GM12878 (cell line): ENCODE measurements at regions of chr3 and their contacts with region 1.

Region 1: DNA sequence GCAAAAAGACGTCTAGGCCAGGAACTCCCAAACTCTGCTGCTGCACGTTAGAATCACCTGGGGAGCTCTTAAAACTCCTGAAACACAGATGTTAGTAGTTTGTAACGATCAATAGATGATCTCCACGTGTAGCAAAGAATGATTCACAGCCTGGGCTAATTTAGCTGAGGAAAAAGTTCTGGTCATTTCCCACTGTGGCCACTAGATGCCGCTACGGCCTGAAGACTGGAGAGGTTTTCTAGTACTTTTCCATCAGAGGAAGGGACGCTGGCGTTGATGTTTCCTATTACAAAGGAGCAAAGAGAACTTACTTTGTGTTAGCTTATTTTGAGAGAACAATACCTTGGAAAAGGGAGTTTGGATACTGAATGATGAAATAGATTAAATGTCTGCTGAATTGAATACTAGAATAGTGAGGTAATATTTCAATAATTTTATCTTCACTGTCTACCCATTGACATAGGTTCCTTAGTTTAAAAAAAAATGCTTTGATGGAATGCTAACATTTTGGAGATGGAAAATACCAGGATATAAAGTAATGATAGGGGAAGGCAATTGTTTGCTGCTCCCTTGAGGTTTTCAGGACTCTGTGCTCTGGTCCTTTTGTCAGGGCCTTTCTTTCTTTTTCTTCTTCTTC is 159.1 kb downstream of the P3H2 start:
- DNase-seq: peak; percentile 19
- ATAC-seq: peak; percentile 82
- H3K4me3 ChIP-seq: no peak overlapping the region
- H3K27ac ChIP-seq: no peak overlapping the region
- H3K4me1 ChIP-seq: no peaks in the 10 kb centered on the region
- H3K27me3 ChIP-seq: no peaks in the 10 kb centered on the region
- CTCF ChIP-seq: peak; percentile 86 to 92 (median 92); a peak in 5 of 6 replicates
- EP300 ChIP-seq: no peak
- POLR2A ChIP-seq: no peak
- RAD21 ChIP-seq: peak; percentile 94

Region 2: DNA sequence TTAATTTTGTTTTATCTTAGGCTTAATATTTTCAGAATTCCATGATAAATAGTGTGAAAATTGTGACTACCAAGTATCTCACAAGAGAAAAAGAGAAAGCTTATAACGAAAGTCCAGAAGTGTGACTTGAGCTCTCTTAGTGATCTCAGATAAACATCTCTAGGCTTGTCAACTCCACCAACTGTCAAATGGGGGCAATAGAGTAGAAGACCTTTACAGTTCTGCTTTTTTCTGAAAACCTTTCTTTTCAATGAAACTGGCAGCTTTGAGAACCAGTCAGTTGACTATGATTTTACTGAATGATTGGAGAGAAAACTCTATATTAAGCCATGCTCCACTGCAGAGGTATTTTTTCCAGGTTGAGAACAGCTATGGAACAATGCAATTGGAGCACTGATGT is 449.6 kb before region 1 on chr3:
- CTCF ChIA-PET with region 1: interaction called, 11 read pairs
- POLR2A ChIA-PET with region 1: no interaction called
- RAD21 ChIA-PET with region 1: interaction called, 4 read pairs
- SMC1A ChIA-PET with region 1: interaction called, 3 read pairs
- in situ Hi-C with region 1: no loop called
- intact Hi-C with region 1: no loop called
- DNase-seq: no peak
- ATAC-seq: peak; percentile 74
- H3K4me3 ChIP-seq: no peak overlapping the region
- H3K27ac ChIP-seq: no peak overlapping the region
- H3K4me1 ChIP-seq: peaks cover 10% of the 10 kb centered on the region; the same call in 1 of the 2 replicates
- H3K27me3 ChIP-seq: no peaks in the 10 kb centered on the region
- CTCF ChIP-seq: peak; percentile 19 to 46 (median 34); a peak in 5 of 6 replicates
- EP300 ChIP-seq: no peak
- POLR2A ChIP-seq: no peak
- RAD21 ChIP-seq: peak; percentile 85

Region 3: DNA sequence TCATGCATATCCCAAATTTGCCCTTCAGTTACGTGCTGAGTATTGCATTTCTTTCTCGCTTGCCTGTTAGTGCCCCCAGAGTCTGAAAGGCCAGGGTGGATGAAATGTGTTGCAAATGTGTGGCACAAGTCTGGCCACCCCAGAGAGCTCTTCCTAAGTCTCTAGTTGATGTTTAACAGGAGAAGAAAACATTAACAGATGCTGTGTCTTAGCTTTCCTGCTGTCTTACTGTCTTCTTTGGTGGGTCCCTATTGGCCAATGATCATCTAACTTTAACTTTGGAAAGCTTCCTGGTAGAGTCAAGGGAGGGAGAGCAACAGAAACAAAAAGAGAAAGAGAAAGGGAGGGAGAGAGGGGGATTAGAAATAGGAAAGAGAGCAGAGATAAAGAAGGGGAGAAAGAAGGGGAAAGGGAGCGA is 235.7 kb after region 1 on chr3:
- CTCF ChIA-PET with region 1: interaction called, 36 read pairs
- POLR2A ChIA-PET with region 1: no interaction called
- RAD21 ChIA-PET with region 1: interaction called, 27 read pairs
- SMC1A ChIA-PET with region 1: interaction called, 41 read pairs
- in situ Hi-C with region 1: loop called (anchors 5 kb)
- intact Hi-C with region 1: no loop called
- DNase-seq: no peak
- ATAC-seq: peak; percentile 50
- H3K4me3 ChIP-seq: no peak overlapping the region
- H3K27ac ChIP-seq: no peak overlapping the region
- H3K4me1 ChIP-seq: no peaks in the 10 kb centered on the region
- H3K27me3 ChIP-seq: no peaks in the 10 kb centered on the region
- CTCF ChIP-seq: no peak
- EP300 ChIP-seq: no peak
- POLR2A ChIP-seq: no peak
- RAD21 ChIP-seq: no peak

Region 4: DNA sequence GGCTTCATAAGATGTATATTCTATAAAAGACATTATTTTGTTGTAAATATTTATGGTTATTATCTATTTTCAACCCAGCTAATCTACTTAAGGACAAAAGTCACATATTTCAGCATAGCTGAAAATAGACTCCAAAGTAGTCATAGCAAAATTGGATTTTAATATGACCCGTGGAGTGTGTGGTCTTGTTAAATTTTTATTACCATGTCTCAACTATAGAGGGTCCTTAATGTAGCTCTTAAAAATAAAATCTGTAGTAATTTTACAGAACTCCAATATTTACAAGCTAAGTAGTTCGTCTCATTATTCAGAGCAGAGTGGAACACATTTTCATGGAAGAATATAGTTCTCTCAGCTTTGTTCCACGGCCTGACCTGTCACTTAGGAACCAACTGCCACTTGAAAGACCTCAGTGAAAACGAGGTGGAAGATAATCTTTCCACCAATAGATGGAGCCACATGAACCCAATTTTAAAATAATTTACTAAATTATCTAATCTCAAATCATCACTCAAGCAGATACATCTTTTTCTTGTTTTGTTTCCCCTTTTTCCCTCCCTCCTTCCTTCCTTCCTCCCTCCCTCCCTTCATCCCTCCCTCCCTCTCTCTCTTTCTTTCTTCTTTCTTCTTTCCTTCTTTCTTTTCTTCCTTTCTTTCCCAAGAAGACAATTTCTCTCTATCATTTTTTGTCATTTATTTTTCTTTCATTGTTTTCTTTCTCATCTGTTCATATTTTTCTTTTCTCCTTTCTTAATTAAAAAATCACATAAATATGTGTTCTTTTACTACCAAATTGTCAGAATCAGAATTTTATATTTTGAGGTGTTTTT is 263.4 kb after region 1 on chr3:
- CTCF ChIA-PET with region 1: interaction called, 69 read pairs
- POLR2A ChIA-PET with region 1: no interaction called
- RAD21 ChIA-PET with region 1: interaction called, 16 read pairs
- SMC1A ChIA-PET with region 1: interaction called, 10 read pairs
- in situ Hi-C with region 1: no loop called
- intact Hi-C with region 1: no loop called
- DNase-seq: no peak
- ATAC-seq: peak; percentile 45
- H3K4me3 ChIP-seq: no peak overlapping the region
- H3K27ac ChIP-seq: no peak overlapping the region
- H3K4me1 ChIP-seq: no peaks in the 10 kb centered on the region
- H3K27me3 ChIP-seq: no peaks in the 10 kb centered on the region
- CTCF ChIP-seq: peak; percentile 13 to 38 (median 16); a peak in 3 of 6 replicates
- EP300 ChIP-seq: no peak
- POLR2A ChIP-seq: no peak
- RAD21 ChIP-seq: peak; percentile 60

Region 5: GRCh38 chr3:190384241-190384863 is 422.7 kb after region 1 on chr3:
- CTCF ChIA-PET with region 1: interaction called, 64 read pairs
- POLR2A ChIA-PET with region 1: no interaction called
- RAD21 ChIA-PET with region 1: interaction called, 31 read pairs
- SMC1A ChIA-PET with region 1: interaction called, 44 read pairs
- in situ Hi-C with region 1: loop called (anchors 10 kb)
- intact Hi-C with region 1: loop called (anchors 2 kb)
- DNase-seq: peak; percentile 19
- ATAC-seq: peak; percentile 94
- H3K4me3 ChIP-seq: no peak overlapping the region
- H3K27ac ChIP-seq: no peak overlapping the region
- H3K4me1 ChIP-seq: no peaks in the 10 kb centered on the region
- H3K27me3 ChIP-seq: no peaks in the 10 kb centered on the region
- CTCF ChIP-seq: peak; percentile 49 to 68 (median 59); a peak in 5 of 6 replicates
- EP300 ChIP-seq: no peak
- POLR2A ChIP-seq: no peak
- RAD21 ChIP-seq: peak; percentile 82

Region 6: DNA sequence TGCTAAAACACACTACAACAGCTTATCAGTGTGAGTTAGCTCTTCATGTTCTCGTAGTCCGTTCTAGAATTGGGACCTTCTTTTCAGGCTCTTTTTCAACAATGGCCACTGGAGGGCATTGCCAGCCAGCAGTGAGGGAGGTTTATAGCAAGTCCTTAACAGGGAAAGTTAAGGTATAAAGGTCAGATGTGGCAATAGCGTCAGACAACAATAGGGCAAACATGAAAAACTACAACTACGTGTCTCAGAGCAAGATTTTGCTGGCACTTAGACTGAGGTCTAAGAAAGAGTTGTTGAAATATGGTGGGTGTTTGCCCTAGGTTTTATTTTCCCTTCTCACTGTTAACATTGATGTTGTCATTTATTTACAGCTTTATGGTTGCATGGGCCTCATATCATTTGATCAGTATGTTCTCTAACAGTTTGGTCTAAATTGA is 739.5 kb after region 1 on chr3:
- CTCF ChIA-PET with region 1: interaction called, 66 read pairs
- POLR2A ChIA-PET with region 1: no interaction called
- RAD21 ChIA-PET with region 1: interaction called, 14 read pairs
- SMC1A ChIA-PET with region 1: interaction called, 44 read pairs
- in situ Hi-C with region 1: loop called (anchors 5 kb)
- intact Hi-C with region 1: loop called (anchors 2 kb)
- DNase-seq: no peak
- ATAC-seq: peak; percentile 73
- H3K4me3 ChIP-seq: no peak overlapping the region
- H3K27ac ChIP-seq: no peak overlapping the region
- H3K4me1 ChIP-seq: no peaks in the 10 kb centered on the region
- H3K27me3 ChIP-seq: no peaks in the 10 kb centered on the region
- CTCF ChIP-seq: peak; percentile 45 to 47 (median 47)
- EP300 ChIP-seq: no peak
- POLR2A ChIP-seq: no peak
- RAD21 ChIP-seq: peak; percentile 49